ENCODE measurements at regions of chr20 and their contacts with region 1.

Region 1: DNA sequence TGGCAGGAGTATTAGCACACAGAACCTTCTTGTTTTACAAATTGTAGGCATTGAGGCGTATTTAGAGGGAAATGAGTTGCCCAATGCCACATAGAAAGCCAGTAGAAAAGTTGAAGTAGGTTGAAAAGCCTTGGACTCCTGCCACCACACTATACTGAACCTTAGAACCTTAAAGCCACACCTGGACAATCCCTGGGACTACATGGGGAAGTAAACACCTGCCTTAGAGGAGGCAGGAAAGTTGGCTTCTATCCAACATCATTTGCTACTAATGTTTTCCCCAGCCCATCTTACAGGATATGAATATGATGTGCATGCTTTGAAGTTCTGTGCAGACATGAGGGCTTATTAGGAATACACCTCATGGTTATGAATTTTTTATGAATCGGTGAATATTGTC is 5.3 kb upstream of the EPPIN start:
- DNase-seq: no peak
- H3K4me3 ChIP-seq: no peak overlapping the region
- H3K27ac ChIP-seq: no peak overlapping the region
- H3K4me1 ChIP-seq: no peaks in the 10 kb centered on the region
- H3K27me3 ChIP-seq: peaks cover 12% of the 10 kb centered on the region
- CTCF ChIP-seq: no peak

Region 2: GRCh38 chr20:45576995-45577394 is 24.5 kb after region 1 on chr20:
- CTCF ChIA-PET with region 1: no interaction called
- POLR2A ChIA-PET with region 1: interaction called, 12 read pairs
- intact Hi-C with region 1: no loop called
- DNase-seq: no peak
- H3K4me3 ChIP-seq: no peak overlapping the region
- H3K27ac ChIP-seq: no peak overlapping the region
- H3K4me1 ChIP-seq: no peaks in the 10 kb centered on the region
- H3K27me3 ChIP-seq: peaks cover 10% of the 10 kb centered on the region
- CTCF ChIP-seq: no peak

Region 3: GRCh38 chr20:45934586-45935415 is 382.3 kb after region 1 on chr20 and contains the start of gene PCIF1:
- CTCF ChIA-PET with region 1: no interaction called
- POLR2A ChIA-PET with region 1: no interaction called
- intact Hi-C with region 1: no loop called
- DNase-seq: peak; percentile 98
- H3K4me3 ChIP-seq: peak within 1 kb of the TSS; percentile 97
- H3K27ac ChIP-seq: peak within 1 kb of the TSS; percentile 100
- H3K4me1 ChIP-seq: peaks cover 36% of the 10 kb centered on the region
- H3K27me3 ChIP-seq: no peaks in the 10 kb centered on the region
- CTCF ChIP-seq: no peak
- total RNA-seq, gene PCIF1: 47.5 and 55.8 TPM in 2 replicates

Measured in A673 (cell line).